ENCODE measurements at regions of chr17 and their contacts with region 1.

Region 1: DNA sequence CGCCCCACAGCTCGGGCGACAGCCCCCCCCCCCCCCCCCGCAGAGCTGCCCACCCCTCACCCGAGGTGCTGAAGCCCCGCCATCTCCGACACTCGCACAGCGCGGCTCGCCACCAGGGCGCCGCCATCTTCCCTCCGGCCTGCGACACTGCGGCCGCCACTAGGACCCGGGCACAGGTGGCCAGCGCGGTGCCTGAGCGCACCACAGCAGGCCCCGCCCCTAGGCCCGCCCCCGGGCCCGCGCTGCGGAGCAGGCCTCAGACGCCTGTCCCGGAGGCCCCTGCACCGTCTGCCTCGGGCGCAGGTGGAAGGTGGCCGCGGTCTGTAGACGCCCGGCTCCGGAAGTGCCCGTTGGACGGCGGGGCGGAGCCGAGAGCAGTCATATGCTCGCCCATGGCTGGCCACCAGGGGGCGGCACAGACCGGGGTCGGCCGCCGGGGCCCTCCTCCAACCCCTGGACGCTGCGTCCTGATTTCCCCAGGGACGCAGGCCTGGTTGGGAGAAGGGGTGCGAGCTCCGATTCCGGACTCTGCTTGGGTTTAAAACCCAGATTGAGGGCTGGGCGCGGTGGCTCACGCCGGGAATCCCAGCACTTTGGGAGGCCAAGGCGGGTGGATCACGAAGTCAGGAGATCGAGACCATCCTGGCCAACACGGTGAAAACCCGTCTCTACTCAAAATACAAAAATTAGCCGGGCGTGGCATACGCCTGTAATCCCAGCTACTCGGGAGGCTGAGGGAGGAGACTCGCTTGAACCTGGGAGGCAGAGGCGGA is at the start of gene MRPL38:
- DNase-seq: peak; percentile 93 to 96 (median 95)
- ATAC-seq: peak; percentile 98
- H3K4me3 ChIP-seq: peak within 1 kb of the TSS; percentile 87
- H3K27ac ChIP-seq: peak within 1 kb of the TSS; percentile 85
- H3K4me1 ChIP-seq: peaks cover 6 to 49% of the 10 kb centered on the region in 2 experiments; a peak in 4 of 5 replicates
- H3K27me3 ChIP-seq: no peaks in the 10 kb centered on the region
- CTCF ChIP-seq: peak; percentile 92 to 97 (median 95)
- EP300 ChIP-seq: peak; percentile 45
- POLR2A ChIP-seq: peak; percentile 67; the same call in 1 of the 2 replicates
- RAD21 ChIP-seq: peak; percentile 100
- polyA plus RNA-seq, gene MRPL38: 4.5 to 13.6 TPM

Region 2: DNA sequence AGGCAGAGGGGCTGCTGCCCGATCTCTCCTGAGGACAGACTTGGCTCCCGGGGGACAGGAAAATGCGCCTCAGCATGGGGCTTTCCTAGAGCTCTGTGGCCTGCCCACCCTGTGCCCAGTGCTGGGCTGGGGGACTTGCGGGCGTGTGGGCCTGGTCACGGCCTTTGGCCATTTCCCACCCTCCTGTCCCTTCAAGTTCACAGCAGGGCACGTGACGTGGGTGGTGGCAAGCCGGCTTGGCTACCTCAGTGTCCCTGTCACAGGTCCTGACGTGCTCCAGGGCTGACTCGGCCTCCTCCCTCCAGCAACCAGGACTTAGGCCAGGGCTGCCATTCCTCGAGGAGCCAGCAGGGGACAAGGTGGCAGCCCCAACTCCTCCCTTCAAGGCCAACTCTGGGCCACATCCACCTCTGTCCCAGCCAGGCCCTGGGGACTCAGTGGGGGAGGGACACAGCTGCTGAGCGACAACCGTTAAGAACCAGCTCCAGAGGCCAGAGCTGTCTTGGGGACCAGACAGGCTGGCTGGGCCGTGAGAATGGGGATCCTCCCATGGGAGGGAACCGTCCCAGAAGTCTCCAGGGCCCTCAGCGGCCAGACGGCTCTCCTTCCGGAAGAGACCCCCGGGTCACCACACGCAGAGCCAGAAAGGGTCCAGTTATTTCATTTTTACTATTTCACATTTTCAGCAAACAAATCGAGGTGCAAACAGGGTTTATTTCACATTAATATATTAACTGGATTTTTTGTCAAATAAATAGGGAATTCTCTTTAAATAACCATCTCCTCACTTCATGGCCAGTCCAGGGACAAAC is 59.7 kb before region 1 on chr17:
- CTCF ChIA-PET with region 1: no interaction called
- POLR2A ChIA-PET with region 1: no interaction called
- in situ Hi-C with region 1: no loop called
- intact Hi-C with region 1: no loop called
- DNase-seq: peak; percentile 79 to 98 (median 87)
- ATAC-seq: peak; percentile 85
- H3K4me3 ChIP-seq: peak overlapping the region; percentile 69
- H3K27ac ChIP-seq: peak overlapping the region; percentile 95
- H3K4me1 ChIP-seq: peaks cover 39 to 87% of the 10 kb centered on the region in 2 experiments
- H3K27me3 ChIP-seq: no peaks in the 10 kb centered on the region
- CTCF ChIP-seq: peak; percentile 85 to 92 (median 90)
- EP300 ChIP-seq: peak; percentile 80
- POLR2A ChIP-seq: peak; percentile 68
- RAD21 ChIP-seq: peak; percentile 54 to 76

Region 3: DNA sequence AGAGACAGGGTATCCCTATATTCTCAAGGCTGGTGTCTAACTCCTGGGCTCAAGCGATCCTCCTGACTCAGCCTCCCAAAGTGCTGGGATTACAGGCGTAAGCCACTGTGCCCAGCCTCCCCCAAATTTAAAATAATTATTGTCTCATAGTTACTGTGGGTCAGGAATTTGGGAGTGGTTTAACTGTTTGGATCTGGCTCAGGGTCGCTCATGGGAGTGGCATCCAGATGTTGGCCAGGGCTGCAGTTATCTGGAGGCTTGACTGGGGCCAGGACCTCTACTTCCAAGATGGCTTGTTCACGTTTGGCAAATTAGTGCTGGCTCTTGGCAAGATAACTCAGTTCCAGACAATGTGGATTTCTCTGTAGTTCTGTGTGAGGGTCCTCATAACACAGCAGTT is 82.1 kb after region 1 on chr17:
- CTCF ChIA-PET with region 1: no interaction called
- POLR2A ChIA-PET with region 1: no interaction called
- in situ Hi-C with region 1: no loop called
- intact Hi-C with region 1: loop called (anchors 5 kb)
- DNase-seq: no peak
- ATAC-seq: no peak
- H3K4me3 ChIP-seq: no peak overlapping the region
- H3K27ac ChIP-seq: no peak overlapping the region
- H3K4me1 ChIP-seq: peaks cover 4 to 19% of the 10 kb centered on the region in 2 experiments
- H3K27me3 ChIP-seq: no peaks in the 10 kb centered on the region
- CTCF ChIP-seq: no peak
- EP300 ChIP-seq: no peak
- POLR2A ChIP-seq: no peak
- RAD21 ChIP-seq: no peak

Region 4: GRCh38 chr17:76005263-76006149 is 100.6 kb after region 1 on chr17:
- CTCF ChIA-PET with region 1: interaction called, 47 read pairs
- POLR2A ChIA-PET with region 1: interaction called, 5 read pairs
- in situ Hi-C with region 1: loop called (anchors 5 kb)
- intact Hi-C with region 1: loop called (anchors 1 kb)
- DNase-seq: peak; percentile 79 to 89 (median 81)
- ATAC-seq: peak; percentile 89
- H3K4me3 ChIP-seq: no peak overlapping the region
- H3K27ac ChIP-seq: no peak overlapping the region
- H3K4me1 ChIP-seq: peaks cover 0 to 45% of the 10 kb centered on the region in 2 experiments; a peak in 3 of 5 replicates
- H3K27me3 ChIP-seq: peaks cover 31 to 34% of the 10 kb centered on the region in 2 experiments
- CTCF ChIP-seq: peak; percentile 83 to 91 (median 86)
- EP300 ChIP-seq: no peak
- POLR2A ChIP-seq: no peak
- RAD21 ChIP-seq: peak; percentile 96 to 97

Measured in K562 (cell line).